Caco-2 (cell line): ENCODE measurements at regions of chr20 and their contacts with region 1.

Region 1: DNA sequence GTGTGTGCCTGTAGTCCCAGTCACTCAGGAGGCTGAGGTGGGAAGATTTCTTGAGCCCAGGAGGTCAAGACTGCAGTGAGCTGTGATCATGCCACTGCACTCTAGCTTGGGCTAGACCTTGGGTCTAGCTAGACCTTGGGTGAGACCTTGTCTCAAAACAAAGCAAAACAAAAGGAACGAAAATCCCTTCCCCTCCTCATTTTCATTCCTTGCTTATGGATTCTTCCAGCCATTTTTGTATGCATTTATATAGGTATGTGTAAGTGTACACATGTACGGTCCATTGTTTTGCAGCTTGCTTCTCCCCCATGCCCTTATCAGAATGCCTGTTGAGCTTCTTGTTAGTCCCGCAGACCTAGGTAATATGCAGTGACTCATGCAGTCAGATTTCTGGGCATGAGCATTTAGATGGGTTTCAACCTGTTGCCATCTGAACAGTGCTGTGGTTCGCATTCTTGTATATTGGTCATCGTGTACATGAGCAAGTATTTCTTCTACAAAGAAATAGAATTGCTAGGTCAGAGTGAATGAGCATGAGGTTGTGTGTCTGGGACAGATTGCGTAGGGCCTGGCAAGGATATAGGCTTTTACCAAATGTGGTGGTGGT is 73.2 kb downstream of the ATRN start:
- DNase-seq: no peak
- H3K4me3 ChIP-seq: no peak overlapping the region
- H3K4me3 Mint-ChIP-seq: no peak overlapping the region
- H3K27ac Mint-ChIP-seq: no peak overlapping the region
- H3K4me1 ChIP-seq: peaks cover 8% of the 10 kb centered on the region
- H3K4me1 Mint-ChIP-seq: no peaks in the 10 kb centered on the region
- H3K27me3 ChIP-seq: no peaks in the 10 kb centered on the region
- H3K27me3 Mint-ChIP-seq: no peaks in the 10 kb centered on the region
- CTCF ChIP-seq: no peak

Region 2: DNA sequence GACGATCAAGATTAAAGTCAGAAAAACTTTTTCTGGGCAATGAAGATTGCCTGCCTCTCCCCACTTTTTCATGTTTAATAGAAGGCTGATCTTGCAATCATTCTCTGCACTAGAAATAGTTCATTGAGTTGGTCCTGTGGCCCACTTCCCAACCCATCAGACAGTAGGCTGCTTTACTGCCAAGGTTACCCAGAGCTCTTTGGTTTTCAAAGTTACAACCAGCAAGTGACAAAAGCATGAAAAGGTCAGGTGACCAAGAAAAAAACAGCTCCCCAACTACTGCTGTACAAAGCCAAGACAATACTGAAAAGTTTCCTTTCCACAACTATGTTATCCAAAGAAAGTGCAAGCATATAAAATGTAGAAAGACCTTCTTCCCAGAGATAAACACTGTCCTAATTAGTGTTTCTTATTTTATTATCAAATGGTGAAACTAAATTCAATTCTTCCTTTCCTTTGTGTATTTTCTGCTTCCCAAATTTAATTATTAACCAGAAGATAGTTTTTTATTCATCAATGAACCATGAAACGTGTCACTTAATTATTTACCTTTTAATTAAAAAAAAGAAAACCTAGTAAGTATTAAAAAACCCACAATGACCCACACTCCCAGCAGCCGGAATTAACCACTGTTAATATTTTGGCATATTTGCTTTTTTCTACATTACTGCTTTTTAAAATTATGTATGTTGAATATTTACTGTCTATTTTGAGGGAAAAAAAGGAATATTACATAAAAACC is 153.1 kb before region 1 on chr20:
- CTCF ChIA-PET with region 1: no interaction called
- POLR2A ChIA-PET with region 1: no interaction called
- intact Hi-C with region 1: no loop called
- DNase-seq: no peak
- H3K4me3 ChIP-seq: no peak overlapping the region
- H3K4me3 Mint-ChIP-seq: no peak overlapping the region
- H3K27ac Mint-ChIP-seq: no peak overlapping the region
- H3K4me1 ChIP-seq: no peaks in the 10 kb centered on the region
- H3K4me1 Mint-ChIP-seq: no peaks in the 10 kb centered on the region
- H3K27me3 ChIP-seq: no peaks in the 10 kb centered on the region
- H3K27me3 Mint-ChIP-seq: no peaks in the 10 kb centered on the region
- CTCF ChIP-seq: no peak

Region 3: GRCh38 chr20:3420211-3420707 is 123.7 kb before region 1 on chr20:
- CTCF ChIA-PET with region 1: no interaction called
- POLR2A ChIA-PET with region 1: no interaction called
- intact Hi-C with region 1: no loop called
- DNase-seq: no peak
- H3K4me3 ChIP-seq: no peak overlapping the region
- H3K4me3 Mint-ChIP-seq: no peak overlapping the region
- H3K27ac Mint-ChIP-seq: no peak overlapping the region
- H3K4me1 ChIP-seq: no peaks in the 10 kb centered on the region
- H3K4me1 Mint-ChIP-seq: no peaks in the 10 kb centered on the region
- H3K27me3 ChIP-seq: no peaks in the 10 kb centered on the region
- H3K27me3 Mint-ChIP-seq: peaks cover 3% of the 10 kb centered on the region
- CTCF ChIP-seq: no peak

Region 4: DNA sequence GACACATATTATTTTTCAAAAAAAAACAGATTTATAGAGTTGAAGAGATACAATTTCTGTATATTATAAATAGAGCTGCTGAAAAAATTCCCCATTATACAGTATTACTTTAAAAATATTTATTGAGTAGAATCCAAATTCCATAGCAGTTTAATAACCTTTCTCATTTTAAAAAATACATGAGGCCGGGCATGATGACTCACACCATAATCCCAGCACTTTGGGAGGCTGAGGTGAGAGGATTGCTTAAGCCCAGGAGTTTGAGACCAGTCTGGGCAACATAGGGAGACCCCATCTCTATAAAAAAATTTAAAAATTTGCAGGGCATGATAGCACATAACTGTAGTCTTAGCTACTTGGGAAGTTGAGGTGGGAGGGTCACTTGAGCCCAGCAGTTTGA is 60.2 kb before region 1 on chr20:
- CTCF ChIA-PET with region 1: no interaction called
- POLR2A ChIA-PET with region 1: no interaction called
- intact Hi-C with region 1: no loop called
- DNase-seq: no peak
- H3K4me3 ChIP-seq: no peak overlapping the region
- H3K4me3 Mint-ChIP-seq: no peak overlapping the region
- H3K27ac Mint-ChIP-seq: no peak overlapping the region
- H3K4me1 ChIP-seq: peaks cover 8% of the 10 kb centered on the region
- H3K4me1 Mint-ChIP-seq: peaks cover 8% of the 10 kb centered on the region
- H3K27me3 ChIP-seq: no peaks in the 10 kb centered on the region
- H3K27me3 Mint-ChIP-seq: no peaks in the 10 kb centered on the region
- CTCF ChIP-seq: no peak

Region 5: GRCh38 chr20:3875378-3875974 is 331.5 kb after region 1 on chr20:
- CTCF ChIA-PET with region 1: no interaction called
- POLR2A ChIA-PET with region 1: interaction called, 12 read pairs
- intact Hi-C with region 1: no loop called
- DNase-seq: no peak
- H3K4me3 ChIP-seq: no peak overlapping the region
- H3K4me3 Mint-ChIP-seq: no peak overlapping the region
- H3K27ac Mint-ChIP-seq: no peak overlapping the region
- H3K4me1 ChIP-seq: peaks cover 4% of the 10 kb centered on the region; the same call in 1 of the 2 replicates
- H3K4me1 Mint-ChIP-seq: peaks cover 7% of the 10 kb centered on the region
- H3K27me3 ChIP-seq: no peaks in the 10 kb centered on the region
- H3K27me3 Mint-ChIP-seq: no peaks in the 10 kb centered on the region
- CTCF ChIP-seq: no peak